ENCODE measurements at regions of chr5 and their contacts with region 1.

Region 1: GRCh38 chr5:176810084-176810597 is at the start of gene UNC5A:
- DNase-seq: peak; percentile 91
- H3K4me3 ChIP-seq: peak within 1 kb of the TSS; percentile 53
- H3K27ac ChIP-seq: peak within 1 kb of the TSS in 1 of 2 experiments; percentile 70; a peak in 2 of 4 replicates
- H3K4me1 ChIP-seq: peaks cover 0 to 40% of the 10 kb centered on the region in 2 experiments; a peak in 1 of 4 replicates
- H3K27me3 ChIP-seq: peaks cover 17% of the 10 kb centered on the region
- CTCF ChIP-seq: no peak
- EP300 ChIP-seq: no peak
- RAD21 ChIP-seq: no peak
- polyA plus RNA-seq, gene UNC5A: 0.46 and 0.55 TPM in 2 replicates

Region 2: GRCh38 chr5:176700239-176700847 is 109.8 kb before region 1 on chr5:
- CTCF ChIA-PET with region 1: interaction called, 41 read pairs
- POLR2A ChIA-PET with region 1: no interaction called
- DNase-seq: peak; percentile 85
- H3K4me3 ChIP-seq: no peak overlapping the region
- H3K27ac ChIP-seq: no peak overlapping the region
- H3K4me1 ChIP-seq: no peaks in the 10 kb centered on the region; a peak in 1 of 4 replicates
- H3K27me3 ChIP-seq: peaks cover 9% of the 10 kb centered on the region
- CTCF ChIP-seq: peak; percentile 31
- EP300 ChIP-seq: no peak
- RAD21 ChIP-seq: peak; percentile 79

Region 3: DNA sequence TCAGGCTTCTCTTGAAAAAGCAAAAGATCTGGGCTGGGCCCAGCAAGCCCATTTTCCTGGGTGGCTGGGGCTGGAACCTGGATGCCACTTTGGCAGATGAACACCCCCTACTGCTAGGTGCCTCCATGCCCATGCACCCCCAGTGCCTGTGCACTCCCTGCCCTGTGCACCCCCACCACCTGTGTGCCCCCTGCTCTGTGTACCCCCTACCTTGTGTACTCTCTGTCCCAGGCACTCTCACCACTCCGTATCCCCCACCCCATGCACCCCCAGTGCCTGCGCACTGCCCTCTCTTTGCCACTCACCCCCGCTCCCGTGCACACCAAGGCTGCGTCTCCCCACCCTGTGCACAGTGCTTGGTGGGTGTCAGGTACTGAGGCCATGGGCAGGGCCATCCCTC is 14.5 kb after region 1 on chr5:
- CTCF ChIA-PET with region 1: interaction called, 28 read pairs
- POLR2A ChIA-PET with region 1: interaction called, 5 read pairs
- DNase-seq: no peak
- H3K4me3 ChIP-seq: no peak overlapping the region
- H3K27ac ChIP-seq: no peak overlapping the region
- H3K4me1 ChIP-seq: peaks cover 0 to 20% of the 10 kb centered on the region in 2 experiments; a peak in 1 of 4 replicates
- H3K27me3 ChIP-seq: no peaks in the 10 kb centered on the region; the same call in 1 of the 2 replicates
- CTCF ChIP-seq: no peak
- EP300 ChIP-seq: no peak
- RAD21 ChIP-seq: no peak

Region 4: GRCh38 chr5:176870110-176870593 is 60.0 kb after region 1 on chr5:
- CTCF ChIA-PET with region 1: interaction called, 24 read pairs
- POLR2A ChIA-PET with region 1: no interaction called
- DNase-seq: peak; percentile 84
- H3K4me3 ChIP-seq: no peak overlapping the region
- H3K27ac ChIP-seq: no peak overlapping the region
- H3K4me1 ChIP-seq: peaks cover 0 to 52% of the 10 kb centered on the region in 2 experiments; a peak in 2 of 4 replicates
- H3K27me3 ChIP-seq: peaks cover 4% of the 10 kb centered on the region; the same call in 1 of the 2 replicates
- CTCF ChIP-seq: peak; percentile 47
- EP300 ChIP-seq: no peak
- RAD21 ChIP-seq: peak; percentile 59

Region 5: GRCh38 chr5:176959051-176959450 is 148.9 kb after region 1 on chr5:
- CTCF ChIA-PET with region 1: interaction called, 14 read pairs
- POLR2A ChIA-PET with region 1: no interaction called
- DNase-seq: peak; percentile 54
- H3K4me3 ChIP-seq: no peak overlapping the region; a peak in 1 of 4 replicates
- H3K27ac ChIP-seq: no peak overlapping the region
- H3K4me1 ChIP-seq: peaks cover 7 to 8% of the 10 kb centered on the region in 2 experiments; a peak in 3 of 4 replicates
- H3K27me3 ChIP-seq: no peaks in the 10 kb centered on the region
- CTCF ChIP-seq: peak; percentile 64
- EP300 ChIP-seq: no peak
- RAD21 ChIP-seq: peak; percentile 80

Measured in SK-N-SH (cell line).